ENCODE measurements at regions of chr1 and their contacts with region 1.

Region 1: DNA sequence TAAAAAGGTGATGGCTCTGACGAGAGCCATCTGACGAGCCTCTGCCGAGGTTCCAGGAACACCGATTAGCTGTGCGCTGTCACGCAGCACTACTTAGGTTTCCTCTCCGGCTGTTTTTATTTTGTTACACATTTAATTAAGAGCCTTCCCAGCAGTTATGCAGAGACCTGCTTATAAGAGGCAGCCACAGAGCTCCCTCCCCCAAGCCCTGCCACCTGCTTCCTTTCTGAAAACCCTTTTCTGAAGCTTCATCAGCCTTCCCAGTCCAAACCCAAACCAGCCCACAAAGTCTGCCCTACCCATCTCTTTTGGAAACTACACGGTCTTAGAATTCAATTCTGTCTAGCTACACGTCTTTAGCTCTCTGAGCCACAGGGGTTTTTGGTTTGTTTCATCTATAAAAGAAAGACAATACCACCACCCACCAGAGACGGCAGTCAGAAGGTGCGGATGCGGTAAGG is 49.1 kb downstream of the ERI3 start:
- DNase-seq: peak; percentile 83
- H3K4me3 Mint-ChIP-seq: peak overlapping the region; percentile 66
- H3K27ac Mint-ChIP-seq: peak overlapping the region; percentile 88
- H3K4me1 Mint-ChIP-seq: peaks cover 38% of the 10 kb centered on the region
- H3K27me3 Mint-ChIP-seq: no peaks in the 10 kb centered on the region

Region 2: DNA sequence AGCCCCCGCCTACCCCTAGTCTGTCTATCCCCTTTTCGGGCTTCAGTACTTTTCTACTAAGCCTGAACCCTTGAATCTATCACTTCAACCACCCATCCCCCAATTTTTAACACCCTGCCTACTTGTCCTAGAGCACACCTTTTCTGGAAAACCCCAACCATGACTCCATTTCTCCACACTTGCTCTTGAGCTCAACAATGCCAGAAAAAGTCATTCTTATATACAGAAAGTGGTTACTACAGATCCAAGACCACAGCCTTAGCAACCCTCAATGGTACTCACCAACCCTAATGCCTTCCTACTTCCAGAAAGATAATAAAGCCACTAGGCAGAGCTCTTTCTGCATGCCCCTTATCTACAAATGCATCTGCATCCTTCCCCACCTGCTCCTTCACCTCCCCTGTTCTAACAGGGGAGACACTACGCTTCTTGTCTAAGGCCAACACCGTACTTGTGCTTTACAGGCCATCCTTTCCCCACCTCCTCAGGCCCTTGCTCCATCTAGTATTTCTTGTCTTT is 51.5 kb before region 1 on chr1:
- intact Hi-C with region 1: loop called (anchors 2 kb)
- DNase-seq: no peak
- H3K4me3 Mint-ChIP-seq: no peak overlapping the region
- H3K27ac Mint-ChIP-seq: no peak overlapping the region
- H3K4me1 Mint-ChIP-seq: no peaks in the 10 kb centered on the region
- H3K27me3 Mint-ChIP-seq: no peaks in the 10 kb centered on the region

Region 3: DNA sequence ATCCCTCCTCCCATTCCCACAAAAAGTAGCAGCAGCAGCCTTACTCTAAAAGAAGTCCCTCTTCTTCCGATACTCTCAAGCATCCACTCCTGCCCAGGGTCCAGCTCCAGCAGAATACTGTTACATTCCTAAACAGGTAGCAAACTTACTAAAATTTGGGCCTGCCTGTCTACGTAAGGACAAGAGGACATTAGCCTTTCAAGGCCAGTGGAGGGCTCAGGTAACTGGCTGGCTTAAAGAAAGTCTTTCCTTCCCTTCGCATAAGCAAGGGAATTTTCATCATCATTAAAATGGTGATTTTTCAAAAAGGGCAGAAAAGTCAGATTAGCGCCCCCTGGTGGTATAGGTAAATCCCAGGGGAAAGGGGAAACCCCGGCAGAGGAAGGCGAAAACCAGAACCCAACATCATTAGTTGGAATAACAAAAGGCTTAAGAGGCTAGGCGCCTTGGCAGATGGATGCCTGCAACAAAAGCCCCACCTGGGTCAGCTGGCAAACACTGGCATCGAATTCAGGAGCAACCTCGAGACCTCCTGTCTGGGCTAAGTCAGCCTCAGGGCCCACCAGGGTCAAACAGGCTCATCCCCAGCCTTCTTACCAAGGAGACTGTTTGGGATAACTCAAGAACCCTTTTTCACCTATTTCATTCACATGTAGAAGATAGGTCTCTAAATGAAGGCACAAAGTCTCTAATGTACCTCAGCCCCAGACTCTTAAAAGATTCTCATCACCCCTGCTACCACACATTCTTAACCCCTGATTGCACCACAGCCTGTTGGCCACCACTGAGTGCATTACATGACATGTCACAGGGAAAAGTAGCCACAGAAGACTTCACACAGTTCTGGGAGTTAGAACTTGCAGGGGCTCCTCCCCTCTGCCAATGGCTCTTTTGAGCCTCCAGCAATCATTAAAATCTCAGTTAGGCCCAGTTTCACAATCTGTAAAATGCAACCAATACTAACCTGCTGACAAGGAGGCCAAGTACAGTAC is 12.4 kb after region 1 on chr1:
- intact Hi-C with region 1: loop called (anchors 1 kb)
- DNase-seq: peak; percentile 85
- H3K4me3 Mint-ChIP-seq: no peak overlapping the region
- H3K27ac Mint-ChIP-seq: peak overlapping the region; percentile 20
- H3K4me1 Mint-ChIP-seq: peaks cover 23% of the 10 kb centered on the region
- H3K27me3 Mint-ChIP-seq: no peaks in the 10 kb centered on the region